GM12878 (cell line): ENCODE measurements at regions of chr6 and their contacts with region 1.

Region 1: GRCh38 chr6:135323202-135323668 is 142.1 kb downstream of the MYB start:
- DNase-seq: peak; percentile 72
- ATAC-seq: peak; percentile 96
- H3K4me3 ChIP-seq: peak overlapping the region; percentile 51
- H3K27ac ChIP-seq: peak overlapping the region; percentile 80
- H3K4me1 ChIP-seq: peaks cover 22% of the 10 kb centered on the region
- H3K27me3 ChIP-seq: no peaks in the 10 kb centered on the region
- CTCF ChIP-seq: no peak
- EP300 ChIP-seq: peak; percentile 93 to 97
- POLR2A ChIP-seq: no peak
- RAD21 ChIP-seq: 0 out of 2 replicates have a peak, but pooled peaks have one; percentile 3

Region 2: DNA sequence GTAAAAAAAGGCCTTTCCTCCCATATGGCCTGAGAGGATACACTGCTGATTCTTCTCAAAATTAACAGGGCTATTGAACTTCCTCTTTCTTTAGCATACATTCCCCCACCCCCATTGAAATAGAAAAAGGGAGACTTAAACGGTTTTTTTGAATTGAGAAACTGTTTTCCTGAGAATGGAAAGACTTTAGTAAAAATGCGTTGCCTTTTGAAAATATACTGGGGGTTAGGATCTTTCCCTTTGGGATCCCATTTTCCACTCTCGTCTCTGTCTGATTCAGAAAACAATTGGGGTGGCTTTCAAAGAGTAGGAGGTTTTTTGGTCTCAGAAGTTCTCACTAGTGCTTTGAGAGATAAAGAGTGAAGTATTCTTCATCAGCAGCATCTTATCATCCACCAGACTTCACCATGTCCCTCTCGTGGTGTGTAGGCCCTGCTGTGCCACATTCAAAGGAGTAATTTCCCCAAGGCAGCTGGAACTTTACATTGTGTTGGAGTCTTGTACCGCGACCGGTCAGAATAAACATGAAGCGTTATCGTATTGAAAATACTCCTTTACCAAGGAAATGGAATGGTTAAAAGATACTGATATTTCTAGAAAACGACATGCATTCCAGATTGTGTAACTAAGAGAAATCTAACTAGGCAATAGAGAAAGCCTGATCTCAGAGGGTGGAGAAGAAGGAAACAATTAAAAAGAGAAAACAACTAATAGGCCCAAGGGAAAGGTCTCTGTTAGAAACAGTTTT is 131.6 kb before region 1 on chr6:
- CTCF ChIA-PET with region 1: no interaction called
- POLR2A ChIA-PET with region 1: no interaction called
- RAD21 ChIA-PET with region 1: no interaction called
- SMC1A ChIA-PET with region 1: interaction called, 12 read pairs
- in situ Hi-C with region 1: no loop called
- intact Hi-C with region 1: no loop called
- DNase-seq: no peak
- ATAC-seq: peak; percentile 78
- H3K4me3 ChIP-seq: no peak overlapping the region
- H3K27ac ChIP-seq: peak overlapping the region; percentile 56
- H3K4me1 ChIP-seq: peaks cover 9% of the 10 kb centered on the region; the same call in 1 of the 2 replicates
- H3K27me3 ChIP-seq: no peaks in the 10 kb centered on the region
- CTCF ChIP-seq: no peak
- EP300 ChIP-seq: no peak
- POLR2A ChIP-seq: no peak
- RAD21 ChIP-seq: no peak

Region 3: GRCh38 chr6:135226537-135226936 is 96.7 kb before region 1 on chr6:
- CTCF ChIA-PET with region 1: interaction called, 5 read pairs
- POLR2A ChIA-PET with region 1: interaction called, 3 read pairs
- RAD21 ChIA-PET with region 1: interaction called, 4 read pairs
- SMC1A ChIA-PET with region 1: interaction called, 11 read pairs
- in situ Hi-C with region 1: no loop called
- intact Hi-C with region 1: loop called (anchors 2 kb)
- DNase-seq: peak; percentile 66
- ATAC-seq: peak; percentile 83
- H3K4me3 ChIP-seq: no peak overlapping the region
- H3K27ac ChIP-seq: no peak overlapping the region
- H3K4me1 ChIP-seq: peaks cover 26% of the 10 kb centered on the region
- H3K27me3 ChIP-seq: no peaks in the 10 kb centered on the region
- CTCF ChIP-seq: no peak
- EP300 ChIP-seq: peak; percentile 76 to 79; a peak in 3 of 4 replicates
- POLR2A ChIP-seq: no peak
- RAD21 ChIP-seq: 0 out of 2 replicates have a peak, but pooled peaks have one; percentile 4

Region 4: GRCh38 chr6:135346747-135347146 is 23.5 kb after region 1 on chr6:
- CTCF ChIA-PET with region 1: no interaction called
- POLR2A ChIA-PET with region 1: no interaction called
- RAD21 ChIA-PET with region 1: interaction called, 4 read pairs
- SMC1A ChIA-PET with region 1: interaction called, 14 read pairs
- in situ Hi-C with region 1: no loop called
- intact Hi-C with region 1: no loop called
- DNase-seq: no peak
- ATAC-seq: peak; percentile 32
- H3K4me3 ChIP-seq: no peak overlapping the region
- H3K27ac ChIP-seq: no peak overlapping the region
- H3K4me1 ChIP-seq: no peaks in the 10 kb centered on the region
- H3K27me3 ChIP-seq: no peaks in the 10 kb centered on the region
- CTCF ChIP-seq: no peak
- EP300 ChIP-seq: no peak
- POLR2A ChIP-seq: no peak
- RAD21 ChIP-seq: no peak

Region 5: GRCh38 chr6:135382182-135382628 is 59.0 kb after region 1 on chr6:
- CTCF ChIA-PET with region 1: interaction called, 6 read pairs
- POLR2A ChIA-PET with region 1: no interaction called
- RAD21 ChIA-PET with region 1: no interaction called
- SMC1A ChIA-PET with region 1: interaction called, 18 read pairs
- in situ Hi-C with region 1: no loop called
- intact Hi-C with region 1: no loop called
- DNase-seq: peak; percentile 37
- ATAC-seq: peak; percentile 97
- H3K4me3 ChIP-seq: no peak overlapping the region
- H3K27ac ChIP-seq: peak overlapping the region; percentile 63
- H3K4me1 ChIP-seq: peaks cover 12% of the 10 kb centered on the region; the same call in 1 of the 2 replicates
- H3K27me3 ChIP-seq: no peaks in the 10 kb centered on the region
- CTCF ChIP-seq: no peak
- EP300 ChIP-seq: peak in 1 of 2 experiments; percentile 68; a peak in 1 of 4 replicates
- POLR2A ChIP-seq: no peak
- RAD21 ChIP-seq: no peak

Region 6: DNA sequence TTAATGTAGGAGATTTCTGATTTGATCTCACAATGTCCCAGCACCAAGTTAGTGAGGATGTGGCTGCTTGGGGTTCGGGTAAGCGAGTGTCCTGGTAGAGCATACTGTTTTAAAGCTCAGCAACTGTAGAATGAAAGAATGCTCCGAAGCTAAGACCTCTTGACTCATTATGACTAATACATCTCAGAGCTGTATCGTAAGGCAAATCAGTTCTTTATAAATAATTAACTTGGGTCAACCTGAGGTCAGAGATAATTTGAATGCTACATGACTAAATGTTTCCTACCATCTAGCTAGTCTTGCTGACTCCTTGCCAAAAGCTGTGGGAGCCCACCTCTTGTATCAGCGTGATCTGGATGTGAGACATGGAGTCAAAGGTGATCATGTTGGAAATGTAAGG is 399.4 kb after region 1 on chr6:
- CTCF ChIA-PET with region 1: no interaction called
- POLR2A ChIA-PET with region 1: no interaction called
- RAD21 ChIA-PET with region 1: no interaction called
- SMC1A ChIA-PET with region 1: no interaction called
- in situ Hi-C with region 1: no loop called
- intact Hi-C with region 1: no loop called
- DNase-seq: no peak
- ATAC-seq: no peak; the same call in 2 of the 3 replicates
- H3K4me3 ChIP-seq: no peak overlapping the region
- H3K27ac ChIP-seq: no peak overlapping the region
- H3K4me1 ChIP-seq: no peaks in the 10 kb centered on the region
- H3K27me3 ChIP-seq: no peaks in the 10 kb centered on the region
- CTCF ChIP-seq: no peak
- EP300 ChIP-seq: no peak
- POLR2A ChIP-seq: no peak
- RAD21 ChIP-seq: no peak